CD4-positive, alpha-beta T cell (primary cell): ENCODE measurements at regions of chr5 and their contacts with region 1.

Region 1: GRCh38 chr5:131224387-131225201 is 39.3 kb upstream of the CDC42SE2 start:
- DNase-seq: peak in 3 of 14 experiments; percentile 48 to 67 (median 49)
- ATAC-seq: peak; percentile 64
- H3K4me3 ChIP-seq: no peak overlapping the region
- H3K4me3 Mint-ChIP-seq: no peak overlapping the region
- H3K27ac ChIP-seq: peak overlapping the region in 1 of 2 donors; percentile 2
- H3K27ac Mint-ChIP-seq: no peak overlapping the region
- H3K4me1 ChIP-seq: peaks cover 15% of the 10 kb centered on the region
- H3K4me1 Mint-ChIP-seq: peaks cover 18% of the 10 kb centered on the region
- H3K27me3 ChIP-seq: no peaks in the 10 kb centered on the region
- H3K27me3 Mint-ChIP-seq: no peaks in the 10 kb centered on the region
- CTCF ChIP-seq: no peak

Region 2: DNA sequence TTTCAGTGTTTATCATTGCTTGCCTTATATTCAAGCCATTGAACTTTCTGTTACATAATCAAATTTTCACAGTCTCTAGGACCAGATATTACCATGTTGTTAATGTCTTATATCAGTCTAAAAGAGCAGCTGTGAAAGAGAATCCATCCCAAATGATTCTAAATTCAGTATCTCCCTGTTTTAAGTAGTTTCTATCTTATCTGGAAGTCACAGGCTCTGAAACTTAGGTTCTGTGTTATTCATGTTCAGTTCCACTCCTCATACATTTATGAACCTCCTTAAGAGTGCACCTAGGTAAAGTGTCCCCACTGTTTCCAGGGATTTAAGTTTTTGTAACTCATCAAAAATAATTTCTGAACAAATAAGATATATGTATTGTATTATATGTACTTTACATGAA is 44.2 kb before region 1 on chr5:
- CTCF ChIA-PET with region 1: no interaction called
- POLR2A ChIA-PET with region 1: no interaction called
- intact Hi-C with region 1: loop called in 1 of 2 experiments (anchors 5 kb)
- DNase-seq: no peak
- ATAC-seq: no peak
- H3K4me3 ChIP-seq: no peak overlapping the region
- H3K4me3 Mint-ChIP-seq: no peak overlapping the region
- H3K27ac ChIP-seq: no peak overlapping the region
- H3K27ac Mint-ChIP-seq: no peak overlapping the region
- H3K4me1 ChIP-seq: no peaks in the 10 kb centered on the region
- H3K4me1 Mint-ChIP-seq: peaks cover 18% of the 10 kb centered on the region
- H3K27me3 ChIP-seq: no peaks in the 10 kb centered on the region
- H3K27me3 Mint-ChIP-seq: no peaks in the 10 kb centered on the region
- CTCF ChIP-seq: no peak

Region 3: DNA sequence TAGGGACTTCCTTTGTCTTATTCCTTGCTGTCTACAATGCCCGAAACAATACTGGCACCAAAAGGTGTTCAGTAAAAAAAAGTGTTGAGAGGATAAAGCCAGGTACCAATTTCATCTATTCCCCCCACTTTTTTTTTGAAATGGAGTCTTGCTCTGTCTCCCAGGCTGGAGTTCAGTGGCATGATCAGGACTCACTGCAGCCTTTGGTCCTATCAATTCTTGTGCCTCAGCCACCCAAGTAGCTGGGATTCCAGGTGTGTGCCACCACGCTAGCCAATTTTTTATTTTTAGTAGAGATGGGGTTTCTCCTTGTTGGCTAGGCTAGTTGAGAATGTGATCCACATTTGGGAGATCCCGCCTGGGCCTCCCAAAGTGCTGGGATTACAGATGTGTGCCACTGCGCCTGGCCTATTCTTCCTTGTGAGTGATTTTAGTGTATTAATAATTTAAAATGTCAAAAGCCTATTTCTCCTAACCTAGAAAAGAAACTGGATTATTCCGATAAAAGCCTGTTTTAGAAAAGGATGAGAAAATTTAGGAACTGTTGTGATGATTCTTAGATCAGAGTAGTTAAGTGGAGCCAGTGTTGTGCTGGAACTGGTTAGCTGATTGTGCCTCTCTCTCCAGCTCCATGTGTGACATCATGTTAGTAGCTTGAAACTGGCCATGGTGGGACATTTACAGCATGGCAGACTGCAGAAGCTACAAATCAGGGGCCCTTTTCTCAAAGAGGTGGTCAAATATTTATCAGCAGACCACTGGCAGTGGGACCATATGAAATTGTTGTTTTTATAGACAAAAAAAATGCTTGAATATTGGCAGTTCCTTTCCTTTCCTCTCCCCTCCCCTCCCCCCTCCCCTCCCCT is 53.5 kb after region 1 on chr5:
- CTCF ChIA-PET with region 1: no interaction called
- POLR2A ChIA-PET with region 1: no interaction called
- intact Hi-C with region 1: no loop called
- DNase-seq: peak in 3 of 14 experiments; percentile 50 to 60 (median 52)
- ATAC-seq: no peak
- H3K4me3 ChIP-seq: no peak overlapping the region
- H3K4me3 Mint-ChIP-seq: peak overlapping the region; percentile 74
- H3K27ac ChIP-seq: peak overlapping the region in 1 of 2 donors; percentile 9
- H3K27ac Mint-ChIP-seq: peak overlapping the region; percentile 77
- H3K4me1 ChIP-seq: peaks cover 57% of the 10 kb centered on the region
- H3K4me1 Mint-ChIP-seq: peaks cover 80% of the 10 kb centered on the region
- H3K27me3 ChIP-seq: no peaks in the 10 kb centered on the region
- H3K27me3 Mint-ChIP-seq: no peaks in the 10 kb centered on the region
- CTCF ChIP-seq: no peak

Region 4: DNA sequence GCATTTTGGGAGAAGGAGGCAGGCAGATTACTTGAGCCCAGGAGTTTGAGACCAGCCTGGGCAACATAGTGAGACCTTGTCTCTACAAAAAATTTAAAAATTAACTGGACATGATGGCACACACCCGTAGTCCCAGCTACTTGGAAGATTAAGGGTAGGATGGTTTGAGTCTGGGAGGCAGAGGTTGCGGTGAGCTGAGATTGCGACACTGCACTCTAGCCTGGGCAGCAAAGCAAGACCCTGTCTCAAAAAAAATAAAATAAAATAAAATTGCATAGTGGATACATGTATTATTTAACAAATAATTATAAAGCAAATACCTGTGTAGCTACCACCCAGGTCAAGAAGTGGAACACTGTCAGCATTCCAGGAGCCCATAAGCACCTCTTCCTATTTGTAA is 129.4 kb after region 1 on chr5:
- CTCF ChIA-PET with region 1: no interaction called
- POLR2A ChIA-PET with region 1: no interaction called
- intact Hi-C with region 1: no loop called
- DNase-seq: no peak
- ATAC-seq: no peak
- H3K4me3 ChIP-seq: no peak overlapping the region
- H3K4me3 Mint-ChIP-seq: no peak overlapping the region
- H3K27ac ChIP-seq: peak overlapping the region in 1 of 2 donors; percentile 25
- H3K27ac Mint-ChIP-seq: peak overlapping the region; percentile 88
- H3K4me1 ChIP-seq: peaks cover 34% of the 10 kb centered on the region
- H3K4me1 Mint-ChIP-seq: peaks cover 69% of the 10 kb centered on the region
- H3K27me3 ChIP-seq: no peaks in the 10 kb centered on the region
- H3K27me3 Mint-ChIP-seq: no peaks in the 10 kb centered on the region
- CTCF ChIP-seq: no peak